ENCODE measurements at regions of chr12 and their contacts with region 1.

Region 1: GRCh38 chr12:48903982-48904411 is 21.3 kb downstream of the FKBP11 start:
- DNase-seq: peak; percentile 91
- H3K4me3 Mint-ChIP-seq: peak overlapping the region; percentile 70
- H3K27ac Mint-ChIP-seq: no peak overlapping the region
- H3K4me1 Mint-ChIP-seq: peaks cover 12% of the 10 kb centered on the region
- H3K27me3 Mint-ChIP-seq: peaks cover 9% of the 10 kb centered on the region

Region 2: GRCh38 chr12:48890657-48891418 is 13.2 kb before region 1 on chr12:
- CTCF ChIA-PET with region 1: interaction called, 24 read pairs
- POLR2A ChIA-PET with region 1: no interaction called
- DNase-seq: peak; percentile 72
- H3K4me3 Mint-ChIP-seq: no peak overlapping the region
- H3K27ac Mint-ChIP-seq: no peak overlapping the region
- H3K4me1 Mint-ChIP-seq: peaks cover 9% of the 10 kb centered on the region
- H3K27me3 Mint-ChIP-seq: peaks cover 20% of the 10 kb centered on the region

Region 3: GRCh38 chr12:48917857-48918537 is 14.0 kb after region 1 on chr12:
- CTCF ChIA-PET with region 1: interaction called, 12 read pairs
- POLR2A ChIA-PET with region 1: no interaction called
- DNase-seq: peak; percentile 60
- H3K4me3 Mint-ChIP-seq: peak overlapping the region; percentile 78
- H3K27ac Mint-ChIP-seq: peak overlapping the region; percentile 91
- H3K4me1 Mint-ChIP-seq: peaks cover 32% of the 10 kb centered on the region
- H3K27me3 Mint-ChIP-seq: no peaks in the 10 kb centered on the region

Region 4: DNA sequence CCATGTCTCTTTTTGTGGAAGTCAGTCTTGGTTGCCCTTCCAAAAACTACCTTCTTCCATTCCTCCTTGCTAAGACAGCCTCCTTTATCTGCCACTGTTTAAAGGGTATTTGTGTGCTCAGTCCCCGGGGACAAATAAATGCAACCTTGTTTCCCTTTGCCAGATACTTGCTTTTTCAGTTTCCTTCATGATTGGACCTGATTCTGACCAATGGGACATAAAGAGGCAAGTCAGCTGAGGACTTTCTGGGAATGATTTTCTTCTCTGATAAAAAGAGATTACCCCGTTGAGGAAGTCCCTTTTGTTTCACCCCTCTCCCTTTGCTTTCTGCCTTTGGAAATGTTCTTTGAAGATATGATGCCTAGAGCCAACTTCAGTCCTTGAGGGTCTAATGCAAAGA is 234.6 kb after region 1 on chr12:
- CTCF ChIA-PET with region 1: no interaction called
- POLR2A ChIA-PET with region 1: no interaction called
- DNase-seq: no peak
- H3K4me3 Mint-ChIP-seq: no peak overlapping the region
- H3K27ac Mint-ChIP-seq: no peak overlapping the region
- H3K4me1 Mint-ChIP-seq: peaks cover 8% of the 10 kb centered on the region
- H3K27me3 Mint-ChIP-seq: no peaks in the 10 kb centered on the region

Measured in activated CD4-positive, alpha-beta T cell treated with anti-CD3 and anti-CD28 coated beads, Interleukin-2, amount 10 ng/mL, durations not matched to agents 7 days and 5 days (primary cell).